Gastrocnemius medialis (tissue), 4 donors: ENCODE measurements at regions of chr3 and their contacts with region 1.

Region 1: GRCh38 chr3:186783073-186783730 is at the start of gene EIF4A2:
- DNase-seq: peak; percentile 78 to 86
- ATAC-seq: peak; percentile 81 to 88
- H3K4me3 ChIP-seq: peak within 1 kb of the TSS; percentile 63 to 93 (median 86)
- H3K27ac ChIP-seq: peak within 1 kb of the TSS; percentile 88 to 99 (median 96)
- H3K4me1 ChIP-seq: peaks cover 38 to 47% of the 10 kb centered on the region in 2 donors
- H3K27me3 ChIP-seq: no peaks in the 10 kb centered on the region
- CTCF ChIP-seq: peak in 1 of 5 experiments; percentile 28
- POLR2A ChIP-seq: peak; percentile 83 to 95
- total RNA-seq, gene EIF4A2: 531 to 622 (median 574) TPM

Region 2: GRCh38 chr3:185585859-185586685 is 1197.1 kb before region 1 on chr3 and contains the start of gene SENP2:
- in situ Hi-C with region 1: loop called in 1 of 4 experiments (anchors 25 kb)
- intact Hi-C with region 1: loop called (anchors 5 kb)
- DNase-seq: peak; percentile 99
- ATAC-seq: peak; percentile 99
- H3K4me3 ChIP-seq: peak within 1 kb of the TSS; percentile 79 to 98 (median 89)
- H3K27ac ChIP-seq: peak within 1 kb of the TSS; percentile 93 to 95 (median 94)
- H3K4me1 ChIP-seq: peaks cover 14 to 25% of the 10 kb centered on the region in 2 donors
- H3K27me3 ChIP-seq: no peaks in the 10 kb centered on the region
- CTCF ChIP-seq: no peak
- POLR2A ChIP-seq: peak; percentile 77 to 80
- total RNA-seq, gene SENP2: 18.6 to 34.9 (median 31.3) TPM

Region 3: DNA sequence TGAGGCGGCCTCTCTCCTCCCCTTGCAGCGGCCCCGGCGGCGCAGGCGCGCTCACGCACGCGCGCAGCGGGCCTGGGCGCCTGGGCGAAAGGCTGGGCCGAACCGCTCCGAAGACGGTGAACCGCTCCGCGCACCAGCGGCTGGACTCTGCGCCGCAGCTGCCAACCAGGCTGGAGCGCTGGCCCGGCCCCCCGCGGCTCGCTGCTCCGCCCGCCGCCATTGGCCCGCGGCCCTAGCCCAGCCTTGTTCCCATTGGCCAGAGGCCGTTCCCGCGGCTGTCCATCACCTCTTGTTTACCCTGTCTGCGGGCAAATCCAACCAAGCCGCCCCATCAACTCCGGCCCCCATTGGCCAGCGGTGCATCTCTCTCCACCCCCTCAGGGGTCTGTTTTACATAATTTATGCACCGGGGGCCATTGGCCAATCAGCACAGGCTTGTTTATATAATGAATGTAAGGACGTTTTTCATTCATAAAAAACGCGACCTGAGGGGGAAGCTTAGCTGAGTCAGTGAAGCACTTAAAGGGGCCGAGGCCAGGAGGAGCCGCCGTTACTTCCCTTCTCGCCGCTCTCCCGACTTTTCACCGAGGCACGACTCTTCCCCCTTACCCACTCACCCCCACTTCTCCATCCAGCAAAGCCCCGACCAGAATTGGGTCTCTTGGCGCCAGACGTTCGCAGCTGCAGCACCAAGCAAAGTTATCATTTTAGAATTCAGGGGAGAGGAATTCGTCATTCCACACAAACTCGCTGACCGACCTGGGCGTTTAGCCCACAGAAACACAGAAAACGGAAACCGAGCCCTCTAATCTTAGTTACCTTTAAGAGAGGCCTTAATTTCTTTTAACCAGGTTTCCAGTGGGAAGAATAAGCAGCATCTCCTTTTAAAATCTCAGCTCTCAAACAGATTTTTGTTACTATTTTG is 674.0 kb before region 1 on chr3 and contains the start of gene ETV5:
- in situ Hi-C with region 1: no loop called
- intact Hi-C with region 1: loop called (anchors 10 kb)
- DNase-seq: peak; percentile 100
- ATAC-seq: peak; percentile 90 to 93
- H3K4me3 ChIP-seq: peak within 1 kb of the TSS; percentile 77 to 87 (median 80)
- H3K27ac ChIP-seq: peak within 1 kb of the TSS; percentile 88 to 95 (median 91)
- H3K4me1 ChIP-seq: peaks cover 18 to 23% of the 10 kb centered on the region in 2 donors
- H3K27me3 ChIP-seq: peaks cover 0 to 6% (median 3%) of the 10 kb centered on the region in 3 donors
- CTCF ChIP-seq: peak in 2 of 5 experiments; percentile 20 to 21
- POLR2A ChIP-seq: peak; percentile 86 to 95
- total RNA-seq, gene ETV5: 19.0 to 31.6 (median 21.3) TPM

Region 4: GRCh38 chr3:186806089-186807055 is 23.2 kb after region 1 on chr3 and contains the start of gene RFC4:
- in situ Hi-C with region 1: no loop called
- intact Hi-C with region 1: loop called (anchors 1 kb)
- DNase-seq: peak; percentile 70 to 71
- ATAC-seq: peak; percentile 95 to 98
- H3K4me3 ChIP-seq: peak within 1 kb of the TSS; percentile 84 to 97 (median 89)
- H3K27ac ChIP-seq: peak within 1 kb of the TSS; percentile 85 to 92 (median 88)
- H3K4me1 ChIP-seq: peaks cover 11 to 12% of the 10 kb centered on the region in 2 donors
- H3K27me3 ChIP-seq: no peaks in the 10 kb centered on the region
- CTCF ChIP-seq: no peak
- POLR2A ChIP-seq: peak; percentile 12 to 38
- total RNA-seq, gene RFC4: 4.5 to 15.1 (median 7.3) TPM

Region 5: GRCh38 chr3:186896875-186897274 is 113.7 kb after region 1 on chr3:
- in situ Hi-C with region 1: no loop called
- intact Hi-C with region 1: no loop called
- DNase-seq: no peak
- ATAC-seq: no peak
- H3K4me3 ChIP-seq: no peak overlapping the region
- H3K27ac ChIP-seq: no peak overlapping the region
- H3K4me1 ChIP-seq: no peaks in the 10 kb centered on the region
- H3K27me3 ChIP-seq: no peaks in the 10 kb centered on the region
- CTCF ChIP-seq: no peak
- POLR2A ChIP-seq: no peak

Region 6: GRCh38 chr3:187714404-187714979 is 931.3 kb after region 1 on chr3:
- in situ Hi-C with region 1: no loop called
- intact Hi-C with region 1: loop called (anchors 10 kb)
- DNase-seq: peak; percentile 60 to 80
- ATAC-seq: peak; percentile 70 to 82
- H3K4me3 ChIP-seq: no peak overlapping the region
- H3K27ac ChIP-seq: peak overlapping the region in 3 of 4 donors; percentile 43 to 67 (median 47)
- H3K4me1 ChIP-seq: peaks cover 17 to 24% of the 10 kb centered on the region in 2 donors
- H3K27me3 ChIP-seq: no peaks in the 10 kb centered on the region
- CTCF ChIP-seq: peak; percentile 94 to 96 (median 95)
- POLR2A ChIP-seq: no peak